ENCODE measurements at regions of chr6 and their contacts with region 1.

Region 1: GRCh38 chr6:151807533-151808370 is at the start of gene ESR1:
- DNase-seq: peak; percentile 31 to 78
- ATAC-seq: peak; percentile 31 to 45 (median 35)
- H3K4me3 ChIP-seq: peak within 1 kb of the TSS; percentile 79
- H3K27ac ChIP-seq: peak within 1 kb of the TSS; percentile 90
- H3K4me1 ChIP-seq: peaks cover 28% of the 10 kb centered on the region
- H3K27me3 ChIP-seq: no peaks in the 10 kb centered on the region
- CTCF ChIP-seq: no peak
- total RNA-seq, gene ESR1: 1.5 to 4.4 (median 2.6) TPM

Region 2: DNA sequence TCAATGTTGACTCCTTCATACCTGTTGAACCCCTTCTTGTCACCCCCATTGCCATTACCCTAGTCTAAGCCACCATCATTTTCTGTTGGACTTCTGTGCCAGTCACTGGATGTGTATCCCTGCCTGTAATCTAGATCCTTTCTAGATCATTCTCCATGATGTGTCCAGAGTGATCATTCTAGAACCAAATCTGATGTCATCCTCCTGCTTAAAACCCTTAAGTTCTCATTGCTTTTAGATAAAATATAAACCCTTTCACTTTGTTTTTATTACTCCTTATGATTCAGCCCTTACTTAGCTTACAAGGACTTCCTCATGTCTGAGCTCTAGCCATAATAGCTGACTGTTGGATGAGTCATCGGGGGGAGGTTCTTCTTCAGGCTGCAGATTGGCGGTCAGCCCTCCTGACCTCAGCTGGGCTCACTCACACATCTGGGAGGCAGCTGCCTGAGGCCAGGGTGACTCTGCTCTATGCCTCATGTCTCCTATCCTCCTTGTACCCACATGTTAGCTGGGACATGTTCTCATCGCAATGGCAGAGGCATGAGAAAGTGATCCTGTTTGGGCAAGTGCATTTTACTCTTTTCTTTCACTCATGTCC is 287.3 kb after region 1 on chr6:
- intact Hi-C with region 1: loop called in 1 of 2 experiments (anchors 10 kb)
- DNase-seq: peak; percentile 84 to 91
- ATAC-seq: peak; percentile 92 to 94 (median 93)
- H3K4me3 ChIP-seq: no peak overlapping the region
- H3K27ac ChIP-seq: peak overlapping the region; percentile 71
- H3K4me1 ChIP-seq: peaks cover 57% of the 10 kb centered on the region
- H3K27me3 ChIP-seq: no peaks in the 10 kb centered on the region
- CTCF ChIP-seq: no peak

Region 3: DNA sequence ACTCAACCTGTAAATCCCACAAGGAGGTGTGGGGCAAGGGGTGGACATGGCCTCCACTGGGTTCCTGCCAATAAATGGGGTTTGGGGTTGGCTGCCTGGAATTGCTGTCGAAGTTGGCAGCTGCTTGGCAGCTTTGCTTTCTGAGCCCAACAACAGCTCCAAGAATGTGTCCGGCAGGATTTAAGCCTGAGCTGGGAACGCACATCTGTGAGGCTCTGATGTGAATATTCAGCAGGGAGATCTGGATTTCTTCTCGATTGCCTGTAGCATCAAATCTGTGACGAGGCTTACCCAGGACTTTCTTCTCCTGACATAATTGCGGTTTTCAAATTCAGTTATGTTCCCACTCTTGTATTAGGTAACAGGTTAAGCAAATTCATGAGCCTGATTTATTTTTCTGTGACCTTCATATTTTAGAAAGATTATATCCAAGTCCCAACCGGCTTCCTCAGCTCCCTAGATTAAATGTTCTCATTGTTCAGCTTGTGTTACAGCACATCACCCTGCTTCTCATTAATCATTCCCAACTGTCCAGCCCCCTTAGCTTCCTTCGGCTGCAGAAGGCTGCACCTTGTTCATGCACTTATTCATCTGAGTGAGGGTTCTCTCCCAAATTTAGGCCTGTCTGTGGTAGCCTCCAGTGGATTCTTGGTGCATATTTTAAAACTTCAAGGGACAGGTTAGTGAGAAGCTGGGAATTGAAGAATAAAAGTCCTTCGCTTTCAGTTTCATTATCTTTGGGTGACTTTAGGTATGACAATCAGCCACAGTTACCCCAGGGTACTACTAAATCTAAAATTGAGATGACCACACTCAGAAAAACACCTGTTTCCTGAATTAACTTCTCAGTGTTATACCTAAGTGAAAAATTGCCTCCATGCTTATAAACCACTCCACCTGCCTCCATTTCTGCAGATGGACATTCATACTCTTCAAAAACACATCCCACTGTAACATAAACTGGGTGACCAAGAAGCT is 309.7 kb after region 1 on chr6:
- intact Hi-C with region 1: loop called in 1 of 2 experiments (anchors 5 kb)
- DNase-seq: no peak
- ATAC-seq: peak; percentile 49 to 83 (median 68)
- H3K4me3 ChIP-seq: peak overlapping the region; percentile 29
- H3K27ac ChIP-seq: peak overlapping the region; percentile 71
- H3K4me1 ChIP-seq: peaks cover 24% of the 10 kb centered on the region
- H3K27me3 ChIP-seq: no peaks in the 10 kb centered on the region
- CTCF ChIP-seq: no peak

Region 4: DNA sequence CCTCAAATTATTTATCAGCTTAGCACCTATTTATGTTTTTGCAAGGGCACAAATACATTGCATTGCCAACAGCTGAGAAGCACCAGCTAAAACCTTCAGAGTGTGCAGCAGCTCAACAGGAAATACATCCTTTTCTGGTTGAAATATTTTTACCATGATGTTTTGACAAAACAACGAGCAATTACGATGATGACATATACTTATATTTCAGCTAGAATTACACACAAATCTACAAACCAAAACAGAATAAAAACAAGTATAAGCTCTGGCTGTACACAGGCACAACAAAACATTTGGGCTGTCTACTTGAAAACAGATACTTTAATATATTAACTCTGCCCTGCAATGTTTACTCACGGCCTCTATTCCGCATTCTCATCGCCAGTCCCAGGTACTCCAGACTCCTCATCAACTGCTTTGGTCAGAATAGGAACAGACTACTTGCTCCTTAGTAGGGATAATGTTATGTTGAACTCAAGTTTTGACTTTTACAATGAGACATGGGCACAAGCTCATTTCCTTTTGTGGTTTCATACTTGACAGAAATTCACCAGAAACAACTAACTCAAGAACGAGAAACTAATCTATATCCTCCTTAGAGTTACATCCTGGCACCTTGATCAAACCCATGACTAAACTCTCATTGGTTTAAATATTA is 377.3 kb after region 1 on chr6:
- intact Hi-C with region 1: no loop called
- DNase-seq: no peak
- ATAC-seq: no peak
- H3K4me3 ChIP-seq: no peak overlapping the region
- H3K27ac ChIP-seq: peak overlapping the region; percentile 27
- H3K4me1 ChIP-seq: peaks cover 6% of the 10 kb centered on the region
- H3K27me3 ChIP-seq: no peaks in the 10 kb centered on the region
- CTCF ChIP-seq: no peak

Measured in psoas muscle (tissue), 8 donors.